Motor neuron (in vitro differentiated cells): ENCODE measurements at regions of chr7 and their contacts with region 1.

Region 1: GRCh38 chr7:27179503-27180430 is 5.3 kb downstream of the HOXA11 start:
- ATAC-seq: peak; percentile 50 to 86 (median 81)
- H3K4me3 ChIP-seq: peak overlapping the region in 3 of 5 donors; percentile 6 to 34 (median 25)
- H3K27ac ChIP-seq: no peak overlapping the region
- H3K4me1 ChIP-seq: peaks cover 0 to 7% of the 10 kb centered on the region in 2 donors

Region 2: DNA sequence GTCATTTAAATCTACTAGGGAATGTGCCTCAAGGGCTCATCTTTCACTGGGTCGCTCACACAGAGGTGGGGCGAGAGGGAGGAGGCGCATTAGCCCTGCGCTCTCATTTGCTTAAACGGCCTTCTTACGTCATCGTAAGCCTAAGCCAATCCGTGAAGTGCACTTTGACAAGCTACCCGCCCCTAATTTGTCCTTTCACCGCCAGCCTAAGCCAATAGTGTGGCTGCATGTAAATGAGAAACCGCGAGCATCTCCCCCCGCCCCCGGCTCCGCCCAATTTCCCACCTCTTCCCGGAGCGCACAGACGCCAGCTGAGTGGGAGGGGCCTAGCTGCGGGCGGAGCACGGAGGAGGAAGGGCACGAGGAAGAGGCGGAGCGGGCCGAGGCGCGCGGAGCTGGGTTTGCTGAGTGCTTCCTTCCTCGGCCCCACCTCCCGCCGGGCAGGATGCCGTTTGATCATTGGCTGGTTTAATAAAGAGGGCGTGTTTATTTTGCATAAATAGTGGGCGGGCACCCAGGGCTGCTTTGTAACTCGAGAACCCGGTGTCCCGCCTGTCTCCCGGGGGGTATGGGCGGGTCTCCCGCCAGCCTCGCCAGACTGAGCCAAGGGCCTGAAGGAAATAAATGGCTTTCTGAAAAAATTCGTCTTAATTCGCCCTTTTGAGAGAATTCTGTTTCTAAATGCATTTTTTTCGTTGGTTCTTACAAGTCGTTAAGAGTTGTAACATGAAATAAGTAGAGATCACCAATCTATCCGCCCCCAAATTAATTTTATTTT is 1317.3 kb before region 1 on chr7:
- in situ Hi-C with region 1: loop called in 5 of 9 experiments (anchors 10 to 25 kb)
- ATAC-seq: peak; percentile 86 to 93 (median 92)
- H3K4me3 ChIP-seq: peak overlapping the region; percentile 7 to 25 (median 14)
- H3K27ac ChIP-seq: no peak overlapping the region
- H3K4me1 ChIP-seq: peaks cover 0 to 2% of the 10 kb centered on the region in 2 donors

Region 3: DNA sequence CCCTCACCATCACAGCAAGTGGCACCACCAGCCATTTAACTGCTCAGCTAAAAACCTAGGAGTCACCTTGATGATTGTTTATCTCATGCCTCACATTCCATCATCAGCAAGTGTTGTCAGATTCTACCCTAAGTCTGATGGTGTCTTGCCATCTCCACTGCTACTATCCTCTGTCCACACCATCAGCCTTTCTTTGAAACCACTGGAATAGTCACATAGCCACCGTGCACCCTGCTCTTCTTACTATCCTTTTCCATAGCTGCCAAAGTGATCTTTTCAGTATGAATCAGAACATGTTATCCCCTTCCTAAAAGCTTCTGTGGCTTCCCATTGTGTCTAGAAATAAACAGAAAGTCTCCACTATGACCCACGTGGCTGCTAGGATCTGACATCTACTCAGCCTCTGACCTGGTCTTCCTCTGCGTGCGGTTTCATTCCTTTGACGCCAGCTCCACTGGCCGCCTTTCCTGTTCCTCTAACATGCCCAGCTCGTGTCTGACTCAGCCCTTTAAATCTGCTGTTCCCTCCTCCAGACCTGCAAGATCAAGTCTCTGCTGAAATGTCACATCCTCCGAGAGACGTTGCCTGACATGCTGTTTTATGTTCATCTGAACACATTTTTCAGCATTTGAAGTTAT is 1998.3 kb after region 1 on chr7:
- in situ Hi-C with region 1: no loop called
- ATAC-seq: no peak
- H3K4me3 ChIP-seq: no peak overlapping the region
- H3K27ac ChIP-seq: no peak overlapping the region
- H3K4me1 ChIP-seq: no peaks in the 10 kb centered on the region